Activated B cell treated with CpG ODN at 0.5 μM for 24 hours (primary cell): ENCODE measurements at regions of chr16 and their contacts with region 1.

Region 1: GRCh38 chr16:75789237-75789636 is 62.9 kb upstream of the CPHXL start:
- DNase-seq: no peak
- ATAC-seq: peak; percentile 40
- H3K4me3 Mint-ChIP-seq: no peak overlapping the region
- H3K27ac Mint-ChIP-seq: no peak overlapping the region
- H3K4me1 Mint-ChIP-seq: no peaks in the 10 kb centered on the region
- H3K27me3 Mint-ChIP-seq: peaks cover 17% of the 10 kb centered on the region
- CTCF ChIP-seq: peak; percentile 66

Region 2: GRCh38 chr16:74846714-74847113 is 942.5 kb before region 1 on chr16:
- CTCF ChIA-PET with region 1: no interaction called
- POLR2A ChIA-PET with region 1: no interaction called
- intact Hi-C with region 1: no loop called
- DNase-seq: no peak
- ATAC-seq: no peak
- H3K4me3 Mint-ChIP-seq: no peak overlapping the region
- H3K27ac Mint-ChIP-seq: no peak overlapping the region
- H3K4me1 Mint-ChIP-seq: no peaks in the 10 kb centered on the region
- H3K27me3 Mint-ChIP-seq: peaks cover 2% of the 10 kb centered on the region
- CTCF ChIP-seq: no peak

Region 3: DNA sequence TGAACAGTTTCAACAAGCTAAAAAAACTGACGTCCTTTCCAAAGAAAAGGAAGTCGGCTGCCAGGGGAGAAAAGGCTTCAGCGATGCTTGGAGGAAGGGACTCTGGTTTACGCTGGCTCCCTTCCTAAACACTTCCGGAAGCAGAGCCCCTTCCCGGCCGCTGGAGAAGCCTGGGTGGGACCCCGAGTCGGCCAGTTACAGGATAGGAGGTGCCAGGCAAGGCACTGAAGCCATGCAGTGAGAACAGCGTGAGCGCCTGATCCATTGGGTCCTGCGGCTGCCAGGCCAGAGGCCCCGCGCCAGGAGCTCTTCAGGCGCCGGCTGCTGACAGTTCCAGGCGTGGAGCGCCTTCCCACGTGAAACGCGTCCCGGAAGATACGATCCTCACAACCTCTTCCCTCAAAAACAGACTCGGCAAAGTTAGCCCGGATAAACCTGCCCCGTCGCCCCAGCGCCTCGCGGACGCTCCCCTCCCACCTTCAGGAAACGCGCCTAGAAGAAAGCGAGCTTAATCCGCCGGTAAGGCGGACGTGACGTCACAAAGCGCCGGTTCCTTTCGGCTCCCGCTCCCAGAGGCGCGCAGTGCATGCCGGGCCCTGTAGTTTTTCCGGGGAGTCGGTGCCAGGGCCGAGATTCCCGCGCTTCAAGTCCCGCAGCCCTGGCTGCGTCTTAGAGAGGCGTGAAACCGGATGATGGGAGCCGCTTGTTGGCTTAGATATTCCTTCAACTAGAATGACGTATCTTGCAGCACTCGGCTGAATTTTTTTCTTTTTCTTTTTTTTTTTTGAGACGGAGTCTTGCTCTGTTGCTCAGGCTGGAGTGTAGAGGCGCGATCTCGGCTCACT is 166.3 kb before region 1 on chr16 and contains the start of gene ADAT1:
- CTCF ChIA-PET with region 1: no interaction called
- POLR2A ChIA-PET with region 1: no interaction called
- intact Hi-C with region 1: no loop called
- DNase-seq: peak; percentile 93
- ATAC-seq: peak; percentile 97
- H3K4me3 Mint-ChIP-seq: peak within 1 kb of the TSS; percentile 98
- H3K27ac Mint-ChIP-seq: peak within 1 kb of the TSS; percentile 95
- H3K4me1 Mint-ChIP-seq: peaks cover 22% of the 10 kb centered on the region
- H3K27me3 Mint-ChIP-seq: no peaks in the 10 kb centered on the region
- CTCF ChIP-seq: no peak
- total RNA-seq, gene ADAT1: 52.7 and 57.2 TPM in 2 replicates

Region 4: GRCh38 chr16:77043076-77043475 is 1253.8 kb after region 1 on chr16:
- CTCF ChIA-PET with region 1: no interaction called
- POLR2A ChIA-PET with region 1: no interaction called
- intact Hi-C with region 1: loop called (anchors 5 kb)
- DNase-seq: no peak
- ATAC-seq: no peak
- H3K4me3 Mint-ChIP-seq: no peak overlapping the region
- H3K27ac Mint-ChIP-seq: no peak overlapping the region
- H3K4me1 Mint-ChIP-seq: no peaks in the 10 kb centered on the region
- H3K27me3 Mint-ChIP-seq: no peaks in the 10 kb centered on the region
- CTCF ChIP-seq: no peak

Region 5: DNA sequence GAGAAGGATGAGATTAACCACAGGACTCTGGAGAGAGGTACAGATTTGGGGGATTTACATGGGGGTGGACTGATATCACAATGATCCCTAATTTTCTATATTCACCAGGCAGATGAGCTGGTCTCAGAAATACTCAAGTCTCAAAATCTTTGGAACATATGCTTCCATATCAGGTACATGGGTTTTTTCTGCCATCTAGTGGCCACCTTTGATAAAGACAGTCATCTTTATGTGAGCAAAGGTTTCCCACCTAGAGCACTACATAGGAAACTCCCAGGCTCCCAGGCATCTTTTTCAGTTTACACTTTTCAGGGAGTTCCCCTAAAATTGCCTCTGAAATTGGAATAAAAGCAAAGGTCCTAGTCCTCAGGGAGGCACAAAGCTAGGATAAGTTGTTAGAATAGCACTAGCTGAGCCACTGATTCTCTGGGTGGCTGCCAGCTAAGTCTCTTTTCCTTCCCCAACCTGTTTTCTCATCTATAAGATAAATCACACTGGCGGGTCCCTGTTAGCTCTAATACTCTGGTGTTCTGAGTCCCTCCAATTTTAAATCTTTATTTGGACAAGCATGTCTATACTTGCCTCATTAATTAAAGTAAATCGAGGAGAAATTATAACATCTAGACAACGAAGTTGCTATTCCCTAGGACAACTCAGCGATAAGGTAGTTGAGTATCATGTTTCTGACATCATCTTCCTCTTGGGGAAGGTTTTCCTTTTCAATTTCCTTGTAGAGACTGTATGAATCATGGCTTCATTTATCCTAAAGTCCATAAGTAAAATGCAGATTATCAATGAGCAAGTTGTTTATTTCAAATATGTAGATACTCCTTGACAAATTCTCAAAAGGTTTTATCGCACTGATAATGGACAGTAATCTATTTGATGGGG is 1382.8 kb after region 1 on chr16:
- CTCF ChIA-PET with region 1: interaction called, 15 read pairs
- POLR2A ChIA-PET with region 1: interaction called, 7 read pairs
- intact Hi-C with region 1: loop called (anchors 1 kb)
- DNase-seq: no peak
- ATAC-seq: peak; percentile 60
- H3K4me3 Mint-ChIP-seq: no peak overlapping the region
- H3K27ac Mint-ChIP-seq: no peak overlapping the region
- H3K4me1 Mint-ChIP-seq: no peaks in the 10 kb centered on the region
- H3K27me3 Mint-ChIP-seq: peaks cover 39% of the 10 kb centered on the region
- CTCF ChIP-seq: peak; percentile 81

Region 6: GRCh38 chr16:77584205-77584859 is 1795.1 kb after region 1 on chr16:
- CTCF ChIA-PET with region 1: no interaction called
- POLR2A ChIA-PET with region 1: no interaction called
- intact Hi-C with region 1: loop called (anchors 2 kb)
- DNase-seq: no peak
- ATAC-seq: peak; percentile 42
- H3K4me3 Mint-ChIP-seq: no peak overlapping the region
- H3K27ac Mint-ChIP-seq: no peak overlapping the region
- H3K4me1 Mint-ChIP-seq: no peaks in the 10 kb centered on the region
- H3K27me3 Mint-ChIP-seq: peaks cover 9% of the 10 kb centered on the region
- CTCF ChIP-seq: peak; percentile 90